HEK293 (cell line): ENCODE measurements at regions of chr12 and their contacts with region 1.

Region 1: DNA sequence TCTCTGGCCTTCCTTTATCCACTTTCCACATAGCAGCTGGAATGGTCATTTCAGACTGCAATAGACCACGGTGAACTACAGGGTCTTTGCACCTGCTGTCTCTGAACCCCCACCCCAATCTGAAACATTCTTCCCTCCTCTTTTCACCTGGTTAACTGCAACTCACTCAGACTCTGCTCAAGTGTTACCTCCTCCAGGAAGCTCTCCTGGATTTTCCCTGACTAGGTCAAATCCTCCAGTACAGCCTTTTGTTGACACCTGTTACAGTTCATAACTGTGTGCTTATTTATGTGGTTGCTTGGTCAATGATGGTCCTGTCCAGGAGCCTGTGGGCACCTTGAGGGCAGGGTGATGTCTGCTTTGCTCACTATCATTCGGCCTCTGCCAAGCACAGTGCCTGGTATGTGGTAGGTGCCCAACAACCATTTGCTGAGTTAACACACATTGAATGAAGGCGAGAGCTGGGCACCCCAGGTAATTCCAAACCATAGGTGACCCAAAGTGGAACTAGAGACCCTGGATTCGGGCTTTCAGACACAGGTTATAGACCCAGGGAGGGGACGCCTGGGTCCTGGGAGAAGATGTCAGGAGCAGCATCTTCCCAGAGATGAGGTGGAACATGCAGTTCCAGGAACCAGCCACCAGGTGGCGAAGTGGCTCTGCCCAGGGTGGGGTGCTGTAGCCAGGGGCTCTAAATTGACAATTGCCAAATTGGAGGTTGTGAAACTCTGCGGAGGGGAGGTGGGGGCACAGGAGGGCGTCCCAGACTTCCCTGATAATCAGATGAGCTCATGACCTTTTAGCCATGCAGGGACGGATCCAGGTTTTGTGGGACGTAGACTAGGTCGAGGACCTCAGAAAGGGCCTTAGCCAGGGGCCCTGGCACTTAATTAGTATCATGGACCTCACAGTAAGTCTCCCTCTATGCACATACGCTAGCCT is 28.1 kb downstream of the TRPV4 start:
- H3K4me3 ChIP-seq: no peak overlapping the region
- H3K27ac ChIP-seq: no peak overlapping the region
- H3K4me1 ChIP-seq: no peaks in the 10 kb centered on the region
- CTCF ChIP-seq: peak; percentile 75

Region 2: DNA sequence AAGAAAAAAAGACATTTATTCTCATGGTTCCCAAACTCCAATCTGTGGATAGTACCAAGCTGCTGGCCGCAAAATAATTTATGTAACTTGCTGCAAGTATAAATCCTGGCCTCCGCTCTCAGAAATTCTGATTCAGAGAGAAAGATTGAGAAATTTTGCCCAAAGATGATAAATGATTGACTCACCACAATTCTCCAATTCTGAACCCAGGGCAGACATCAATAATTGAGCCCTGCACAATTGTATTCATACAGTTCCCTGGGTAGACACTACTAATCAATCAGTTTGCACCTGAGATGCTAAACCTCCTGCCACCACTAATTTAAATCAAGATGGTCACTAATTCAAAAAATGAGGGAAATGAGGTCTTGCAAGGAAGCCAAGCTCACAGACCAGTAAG is 10.1 kb before region 1 on chr12:
- CTCF ChIA-PET with region 1: interaction called, 21 read pairs
- POLR2A ChIA-PET with region 1: no interaction called
- H3K4me3 ChIP-seq: no peak overlapping the region
- H3K27ac ChIP-seq: no peak overlapping the region
- H3K4me1 ChIP-seq: no peaks in the 10 kb centered on the region
- CTCF ChIP-seq: no peak

Region 3: DNA sequence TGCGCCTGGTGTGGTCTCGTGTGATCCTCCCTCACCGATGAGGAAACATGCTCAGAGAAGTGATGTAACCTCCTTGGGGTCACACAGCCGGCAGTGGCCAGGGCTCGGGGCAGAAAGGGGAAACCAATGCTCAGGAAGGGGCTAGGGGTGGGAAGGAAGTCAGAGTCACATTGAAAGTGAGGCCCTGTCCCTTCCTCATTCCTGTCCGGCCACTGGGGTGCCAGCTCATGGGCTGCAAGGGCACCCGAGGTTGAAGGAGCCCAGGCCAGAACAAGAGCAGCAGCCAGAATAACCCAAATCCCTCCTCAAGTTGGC is 23.1 kb after region 1 on chr12:
- CTCF ChIA-PET with region 1: interaction called, 11 read pairs
- POLR2A ChIA-PET with region 1: no interaction called
- H3K4me3 ChIP-seq: no peak overlapping the region
- H3K27ac ChIP-seq: no peak overlapping the region
- H3K4me1 ChIP-seq: no peaks in the 10 kb centered on the region
- CTCF ChIP-seq: no peak

Region 4: DNA sequence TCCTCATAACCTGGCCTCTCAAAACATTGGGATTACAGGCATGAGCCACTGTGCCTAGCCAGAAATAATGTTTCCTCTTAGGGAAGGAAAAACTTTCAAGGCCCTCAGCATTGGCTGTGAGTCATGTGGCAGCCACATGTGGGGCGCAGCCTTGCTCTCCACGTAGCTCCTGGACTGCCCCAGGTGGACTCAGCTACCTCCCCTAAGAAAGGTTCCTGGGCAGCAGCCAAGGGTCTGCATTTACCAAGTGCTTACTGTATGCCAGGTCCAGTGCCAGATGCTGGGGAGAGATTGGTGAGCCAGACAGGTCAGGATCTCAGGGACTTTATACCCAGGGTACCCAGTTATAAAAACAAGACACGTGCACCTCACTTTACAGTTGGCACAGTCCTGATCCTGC is 31.8 kb after region 1 on chr12:
- CTCF ChIA-PET with region 1: interaction called, 131 read pairs
- POLR2A ChIA-PET with region 1: no interaction called
- H3K4me3 ChIP-seq: no peak overlapping the region
- H3K27ac ChIP-seq: no peak overlapping the region
- H3K4me1 ChIP-seq: no peaks in the 10 kb centered on the region
- CTCF ChIP-seq: no peak

Region 5: GRCh38 chr12:109880016-109880931 is 75.2 kb after region 1 on chr12 and contains the start of gene GLTP:
- CTCF ChIA-PET with region 1: interaction called, 10 read pairs
- POLR2A ChIA-PET with region 1: no interaction called
- H3K4me3 ChIP-seq: peak within 1 kb of the TSS; percentile 71
- H3K27ac ChIP-seq: peak within 1 kb of the TSS; percentile 51; the same call in 1 of the 2 replicates
- H3K4me1 ChIP-seq: peaks cover 8% of the 10 kb centered on the region
- CTCF ChIP-seq: peak; percentile 62